Gastrocnemius medialis (tissue), 4 donors: ENCODE measurements at regions of chr12 and their contacts with region 1.

Region 1: DNA sequence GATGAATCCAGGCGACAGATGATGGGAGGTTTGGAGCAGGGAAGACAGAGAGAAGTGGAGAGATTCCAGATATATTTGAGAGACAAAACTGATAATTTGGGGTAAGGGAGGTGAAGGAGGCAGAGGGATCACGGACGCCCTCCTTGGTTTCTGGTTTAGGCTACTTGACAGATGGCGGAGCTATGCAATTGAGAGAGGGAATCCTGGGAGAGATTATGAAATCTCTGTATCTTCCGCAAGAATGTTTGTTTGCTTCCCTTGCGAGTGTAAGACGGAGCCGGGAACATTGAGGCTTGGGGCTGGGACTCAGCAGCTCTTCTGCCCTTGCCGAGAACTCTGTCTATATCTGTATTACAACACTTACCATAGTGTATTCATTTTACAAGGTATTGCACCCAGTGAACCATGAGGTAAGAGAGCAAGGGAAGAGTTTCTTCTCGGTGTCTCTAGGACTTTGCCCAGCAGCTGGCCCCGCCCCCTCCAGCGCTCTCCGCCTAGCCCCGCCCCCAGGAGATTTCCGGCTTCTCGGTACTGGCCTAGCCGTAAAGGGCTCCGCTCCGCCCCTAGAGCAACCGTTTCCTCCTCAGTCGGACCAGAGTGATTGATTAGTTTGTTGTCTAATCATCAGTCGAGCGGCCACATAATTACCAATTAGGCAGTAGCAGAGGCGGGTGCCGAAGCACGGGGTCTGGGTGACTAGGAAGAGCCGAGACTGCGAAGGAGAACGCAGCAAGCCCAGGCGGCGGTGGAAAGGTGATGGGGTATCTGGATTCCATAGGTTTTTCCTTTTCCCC is at the start of gene PRR13:
- DNase-seq: peak; percentile 99
- ATAC-seq: peak; percentile 94 to 98
- H3K4me3 ChIP-seq: peak within 1 kb of the TSS; percentile 68 to 80 (median 78)
- H3K27ac ChIP-seq: peak within 1 kb of the TSS; percentile 87 to 94 (median 91)
- H3K4me1 ChIP-seq: peaks cover 12 to 13% of the 10 kb centered on the region in 2 donors
- H3K27me3 ChIP-seq: no peaks in the 10 kb centered on the region
- CTCF ChIP-seq: no peak
- POLR2A ChIP-seq: peak; percentile 89 to 97
- total RNA-seq, gene PRR13: 40.3 to 90.4 (median 74.2) TPM

Region 2: GRCh38 chr12:52192173-52192791 is 1249.0 kb before region 1 on chr12:
- in situ Hi-C with region 1: no loop called
- intact Hi-C with region 1: no loop called
- DNase-seq: peak; percentile 68 to 75
- ATAC-seq: peak; percentile 94 to 95
- H3K4me3 ChIP-seq: no peak overlapping the region
- H3K27ac ChIP-seq: peak overlapping the region in 2 of 4 donors; percentile 10 to 49
- H3K4me1 ChIP-seq: peaks cover 12 to 18% of the 10 kb centered on the region in 2 donors
- H3K27me3 ChIP-seq: no peaks in the 10 kb centered on the region
- CTCF ChIP-seq: no peak
- POLR2A ChIP-seq: no peak

Region 3: DNA sequence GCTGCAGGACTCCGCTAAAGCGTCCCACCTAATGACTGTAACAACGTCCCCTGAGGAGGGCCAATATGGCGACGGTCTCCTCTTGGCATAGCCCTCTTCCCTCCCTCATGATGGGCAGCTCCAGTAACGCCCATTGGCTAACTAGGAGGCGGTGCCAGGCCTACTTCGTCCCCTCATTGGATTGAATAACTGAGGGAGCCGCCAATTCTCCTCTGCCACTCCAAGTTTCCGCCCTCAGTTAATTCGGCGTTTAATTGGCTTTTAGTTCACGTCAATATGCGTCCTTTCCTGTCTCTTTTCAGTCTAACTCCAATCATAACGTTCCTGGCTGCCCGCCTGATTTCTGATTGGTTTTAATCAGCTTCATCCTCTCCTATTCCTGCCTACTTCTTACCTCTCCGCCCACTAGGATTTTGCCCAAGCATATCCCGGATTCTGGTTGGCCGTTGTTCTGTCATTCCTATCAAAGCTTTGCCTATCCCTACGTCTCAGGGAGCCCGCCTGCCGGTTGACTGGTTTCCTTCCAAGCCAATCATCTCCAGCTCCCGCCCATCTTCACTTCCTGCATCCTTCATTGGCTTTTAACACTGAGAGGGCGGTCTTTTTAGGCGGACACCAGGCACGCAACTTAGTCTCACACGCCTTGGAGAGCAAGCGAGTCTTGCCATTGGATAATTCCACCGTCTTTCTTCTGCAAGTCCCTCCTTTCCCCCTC is 61.7 kb before region 1 on chr12:
- in situ Hi-C with region 1: no loop called
- intact Hi-C with region 1: loop called (anchors 1 kb)
- DNase-seq: peak; percentile 100
- ATAC-seq: peak; percentile 84 to 89
- H3K4me3 ChIP-seq: peak overlapping the region; percentile 57 to 86 (median 66)
- H3K27ac ChIP-seq: peak overlapping the region; percentile 93 to 99 (median 96)
- H3K4me1 ChIP-seq: peaks cover 43 to 46% of the 10 kb centered on the region in 2 donors
- H3K27me3 ChIP-seq: no peaks in the 10 kb centered on the region
- CTCF ChIP-seq: no peak
- POLR2A ChIP-seq: peak; percentile 73 to 83